CD8-positive, alpha-beta memory T cell (primary cell): ENCODE measurements at regions of chr14 and their contacts with region 1.

Region 1: GRCh38 chr14:70955543-70956480 is 48.6 kb downstream of the PCNX1 start:
- DNase-seq: peak; percentile 23 to 73 (median 49)
- H3K4me3 ChIP-seq: no peak overlapping the region
- H3K4me3 Mint-ChIP-seq: no peak overlapping the region
- H3K27ac ChIP-seq: no peak overlapping the region
- H3K27ac Mint-ChIP-seq: peak overlapping the region in 7 of 8 donors; percentile 37 to 91 (median 71)
- H3K4me1 ChIP-seq: peaks cover 24% of the 10 kb centered on the region
- H3K4me1 Mint-ChIP-seq: peaks cover 40 to 51% (median 42%) of the 10 kb centered on the region in 3 donors
- H3K27me3 ChIP-seq: no peaks in the 10 kb centered on the region
- H3K27me3 Mint-ChIP-seq: no peaks in the 10 kb centered on the region

Region 2: DNA sequence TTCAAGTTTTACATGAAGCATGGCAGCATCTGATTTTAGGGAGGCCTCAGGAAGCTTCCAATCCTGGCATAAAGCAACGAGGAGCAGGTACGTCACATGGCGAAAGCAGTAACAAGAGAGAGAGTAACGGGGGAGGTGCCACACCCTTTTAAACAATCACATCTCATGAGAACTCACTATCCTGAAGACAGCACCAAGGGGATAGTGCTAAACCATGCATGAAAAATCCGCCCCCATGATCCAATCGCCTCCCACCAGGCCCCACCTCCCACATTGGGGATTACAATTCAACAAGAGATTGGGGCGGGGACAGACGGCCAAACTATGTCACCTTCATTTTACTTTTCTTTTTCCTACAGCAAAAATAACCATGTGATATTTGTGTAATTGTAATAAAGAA is 139.3 kb before region 1 on chr14:
- CTCF ChIA-PET with region 1: interaction called, 56 read pairs
- POLR2A ChIA-PET with region 1: interaction called, 5 read pairs
- DNase-seq: no peak
- H3K4me3 ChIP-seq: no peak overlapping the region
- H3K4me3 Mint-ChIP-seq: no peak overlapping the region
- H3K27ac ChIP-seq: no peak overlapping the region
- H3K27ac Mint-ChIP-seq: no peak overlapping the region
- H3K4me1 ChIP-seq: peaks cover 16% of the 10 kb centered on the region
- H3K4me1 Mint-ChIP-seq: peaks cover 7 to 11% (median 8%) of the 10 kb centered on the region in 3 donors
- H3K27me3 ChIP-seq: peaks cover 6% of the 10 kb centered on the region
- H3K27me3 Mint-ChIP-seq: no peaks in the 10 kb centered on the region

Region 3: GRCh38 chr14:70919774-70920173 is 36.0 kb before region 1 on chr14:
- CTCF ChIA-PET with region 1: interaction called, 13 read pairs
- POLR2A ChIA-PET with region 1: interaction called, 4 read pairs
- DNase-seq: peak in 1 of 5 donors; percentile 7
- H3K4me3 ChIP-seq: no peak overlapping the region
- H3K4me3 Mint-ChIP-seq: peak overlapping the region in 6 of 7 donors; percentile 23 to 71 (median 69)
- H3K27ac ChIP-seq: no peak overlapping the region
- H3K27ac Mint-ChIP-seq: peak overlapping the region; percentile 78 to 94 (median 90)
- H3K4me1 ChIP-seq: peaks cover 76% of the 10 kb centered on the region
- H3K4me1 Mint-ChIP-seq: peaks cover 85 to 100% (median 100%) of the 10 kb centered on the region in 3 donors
- H3K27me3 ChIP-seq: no peaks in the 10 kb centered on the region
- H3K27me3 Mint-ChIP-seq: no peaks in the 10 kb centered on the region

Region 4: DNA sequence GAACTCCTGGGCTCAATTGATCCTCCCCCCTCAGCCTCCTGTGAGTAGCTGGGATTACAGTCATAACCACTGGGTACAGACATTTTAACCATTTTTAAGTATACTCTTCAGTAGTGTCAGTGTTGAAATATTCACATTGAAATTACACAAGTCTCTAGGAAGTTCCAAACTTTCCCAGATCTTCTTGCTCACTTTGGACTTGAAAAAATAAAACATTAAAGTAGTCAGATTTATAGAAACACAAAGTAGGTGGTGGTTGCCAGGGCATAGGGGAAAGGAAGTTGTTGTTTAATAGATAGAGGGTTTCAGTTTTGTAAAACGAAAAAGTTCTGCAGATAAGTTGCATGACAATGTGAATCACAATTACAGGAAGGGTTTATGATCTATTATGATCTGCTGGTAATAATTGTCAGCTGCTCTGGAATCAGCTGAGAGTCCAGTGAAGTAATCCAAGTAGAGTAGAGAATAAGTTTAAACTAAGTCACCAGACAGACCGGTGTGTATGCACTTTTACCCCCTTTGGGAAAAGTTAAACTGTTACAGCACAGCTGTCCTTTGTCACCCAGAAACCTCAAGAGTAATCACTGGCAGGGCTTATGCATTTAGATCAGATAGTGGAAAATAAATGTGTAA is 21.2 kb before region 1 on chr14:
- CTCF ChIA-PET with region 1: interaction called, 26 read pairs
- POLR2A ChIA-PET with region 1: interaction called, 3 read pairs
- DNase-seq: peak in 1 of 5 donors; percentile 17
- H3K4me3 ChIP-seq: peak overlapping the region; percentile 40
- H3K4me3 Mint-ChIP-seq: peak overlapping the region; percentile 47 to 79 (median 68)
- H3K27ac ChIP-seq: no peak overlapping the region
- H3K27ac Mint-ChIP-seq: peak overlapping the region; percentile 39 to 97 (median 75)
- H3K4me1 ChIP-seq: peaks cover 37% of the 10 kb centered on the region
- H3K4me1 Mint-ChIP-seq: peaks cover 84 to 94% (median 93%) of the 10 kb centered on the region in 3 donors
- H3K27me3 ChIP-seq: no peaks in the 10 kb centered on the region
- H3K27me3 Mint-ChIP-seq: no peaks in the 10 kb centered on the region

Region 5: DNA sequence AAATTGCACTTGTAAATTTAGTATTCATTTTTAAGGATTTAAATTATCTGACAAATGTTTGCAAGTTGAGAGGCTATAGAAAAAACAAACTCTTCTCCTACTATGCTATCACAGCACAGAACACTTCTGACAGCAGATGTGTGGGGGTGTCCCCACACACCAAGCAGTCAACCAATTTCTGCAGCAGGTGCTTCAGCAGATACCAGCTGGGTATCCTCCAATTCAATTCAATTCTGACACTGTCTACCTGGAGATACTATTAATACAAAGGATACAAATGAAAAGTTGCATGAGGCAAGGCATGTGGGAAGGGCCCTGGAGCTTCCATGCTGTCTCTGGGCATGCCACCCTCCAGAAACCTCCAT is 13.5 kb before region 1 on chr14:
- CTCF ChIA-PET with region 1: interaction called, 44 read pairs
- POLR2A ChIA-PET with region 1: interaction called, 8 read pairs
- DNase-seq: no peak
- H3K4me3 ChIP-seq: peak overlapping the region; percentile 10
- H3K4me3 Mint-ChIP-seq: peak overlapping the region; percentile 10 to 87 (median 64)
- H3K27ac ChIP-seq: no peak overlapping the region
- H3K27ac Mint-ChIP-seq: peak overlapping the region; percentile 24 to 95 (median 90)
- H3K4me1 ChIP-seq: peaks cover 15% of the 10 kb centered on the region
- H3K4me1 Mint-ChIP-seq: peaks cover 78 to 88% (median 84%) of the 10 kb centered on the region in 3 donors
- H3K27me3 ChIP-seq: no peaks in the 10 kb centered on the region
- H3K27me3 Mint-ChIP-seq: no peaks in the 10 kb centered on the region

Region 6: GRCh38 chr14:71206766-71207371 is 251.1 kb after region 1 on chr14:
- CTCF ChIA-PET with region 1: no interaction called
- POLR2A ChIA-PET with region 1: no interaction called
- DNase-seq: no peak
- H3K4me3 ChIP-seq: no peak overlapping the region
- H3K4me3 Mint-ChIP-seq: no peak overlapping the region
- H3K27ac ChIP-seq: no peak overlapping the region
- H3K27ac Mint-ChIP-seq: no peak overlapping the region
- H3K4me1 ChIP-seq: no peaks in the 10 kb centered on the region
- H3K4me1 Mint-ChIP-seq: peaks cover 0 to 4% (median 0%) of the 10 kb centered on the region in 3 donors
- H3K27me3 ChIP-seq: no peaks in the 10 kb centered on the region
- H3K27me3 Mint-ChIP-seq: peaks cover 0 to 2% of the 10 kb centered on the region in 2 donors